Calu3 (cell line): ENCODE measurements at regions of chr16 and their contacts with region 1.

Region 1: DNA sequence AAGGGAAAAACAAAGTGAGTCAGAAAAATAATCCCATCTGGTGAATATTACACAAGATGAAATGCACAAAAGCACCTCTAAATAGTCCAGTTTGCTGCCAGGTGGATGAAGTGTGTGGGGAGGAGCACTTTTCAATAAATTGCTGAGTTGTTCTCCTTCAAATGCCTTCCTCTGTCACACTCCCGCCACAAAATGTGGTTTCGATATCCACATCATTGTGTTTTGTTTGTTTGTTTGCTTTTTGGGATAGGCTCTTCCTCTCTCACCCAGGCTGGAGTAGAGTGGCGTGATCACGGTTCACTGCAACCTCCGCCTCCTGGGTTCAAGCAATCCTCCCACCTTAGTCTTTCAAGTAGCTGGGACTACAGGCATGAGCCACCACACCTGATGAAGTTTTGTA is 24.6 kb upstream of the SHISA9 start:
- DNase-seq: no peak
- H3K4me3 Mint-ChIP-seq: no peak overlapping the region
- H3K27ac Mint-ChIP-seq: no peak overlapping the region
- H3K4me1 Mint-ChIP-seq: no peaks in the 10 kb centered on the region
- H3K27me3 Mint-ChIP-seq: peaks cover 16% of the 10 kb centered on the region
- CTCF ChIP-seq: no peak

Region 2: GRCh38 chr16:12750554-12750918 is 126.2 kb before region 1 on chr16:
- CTCF ChIA-PET with region 1: no interaction called
- intact Hi-C with region 1: no loop called
- DNase-seq: no peak
- H3K4me3 Mint-ChIP-seq: no peak overlapping the region
- H3K27ac Mint-ChIP-seq: no peak overlapping the region
- H3K4me1 Mint-ChIP-seq: no peaks in the 10 kb centered on the region
- H3K27me3 Mint-ChIP-seq: peaks cover 15% of the 10 kb centered on the region
- CTCF ChIP-seq: no peak

Region 3: DNA sequence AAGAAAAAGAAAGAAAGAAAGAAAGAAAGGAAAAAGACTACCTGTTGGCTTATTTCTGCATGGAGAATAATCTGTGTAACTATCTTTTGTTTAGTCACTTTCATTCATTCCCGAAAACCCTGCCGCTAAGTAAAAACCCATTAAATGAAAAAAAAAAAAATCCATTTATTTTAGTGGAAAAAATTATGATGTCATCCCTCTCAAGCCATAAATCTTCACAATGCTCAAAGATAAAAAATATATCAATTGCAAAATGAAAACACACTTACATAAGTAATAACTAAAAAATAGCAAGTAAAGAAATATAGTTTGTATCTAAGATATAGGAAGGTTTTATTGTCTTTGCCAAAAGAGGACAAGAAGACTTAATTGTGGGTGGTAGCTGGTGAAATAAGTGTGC is 26.6 kb before region 1 on chr16:
- CTCF ChIA-PET with region 1: interaction called, 10 read pairs
- intact Hi-C with region 1: no loop called
- DNase-seq: no peak
- H3K4me3 Mint-ChIP-seq: no peak overlapping the region
- H3K27ac Mint-ChIP-seq: no peak overlapping the region
- H3K4me1 Mint-ChIP-seq: no peaks in the 10 kb centered on the region
- H3K27me3 Mint-ChIP-seq: no peaks in the 10 kb centered on the region
- CTCF ChIP-seq: no peak

Region 4: DNA sequence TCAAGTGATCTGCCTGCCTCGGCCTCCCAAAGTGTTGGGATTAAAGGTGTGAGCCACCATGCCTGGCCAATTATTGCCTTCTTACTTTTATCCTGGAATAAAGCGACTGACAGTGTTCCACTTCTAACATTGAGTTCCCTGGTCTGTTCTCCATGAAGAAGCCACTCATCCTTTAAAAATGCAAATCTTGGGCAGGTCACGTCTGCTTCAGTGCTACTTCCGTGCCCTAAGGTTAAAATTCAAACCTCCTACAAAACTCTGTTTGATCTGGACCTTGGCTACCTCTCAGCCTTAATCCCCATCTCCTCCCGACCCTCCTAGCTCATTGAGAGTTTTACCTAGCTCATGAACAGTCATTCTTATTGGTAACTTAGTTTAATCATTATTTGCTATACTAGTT is 15.1 kb after region 1 on chr16:
- CTCF ChIA-PET with region 1: no interaction called
- intact Hi-C with region 1: no loop called
- DNase-seq: no peak
- H3K4me3 Mint-ChIP-seq: no peak overlapping the region
- H3K27ac Mint-ChIP-seq: no peak overlapping the region
- H3K4me1 Mint-ChIP-seq: no peaks in the 10 kb centered on the region
- H3K27me3 Mint-ChIP-seq: peaks cover 41% of the 10 kb centered on the region
- CTCF ChIP-seq: no peak